ENCODE measurements at regions of chr1 and their contacts with region 1.

Region 1: GRCh38 chr1:32870615-32871363 is at the start of gene FNDC5:
- DNase-seq: peak in 1 of 2 donors; percentile 41
- ATAC-seq: peak; percentile 23 to 68 (median 47)
- H3K4me3 ChIP-seq: peak within 1 kb of the TSS; percentile 42 to 61 (median 52)
- H3K27ac ChIP-seq: peak within 1 kb of the TSS in 8 of 10 donors; percentile 44 to 76 (median 60)
- H3K4me1 ChIP-seq: peaks cover 4 to 44% (median 27%) of the 10 kb centered on the region in 9 donors
- H3K27me3 ChIP-seq: peaks cover 0 to 42% (median 0%) of the 10 kb centered on the region in 7 donors
- CTCF ChIP-seq: no peak
- total RNA-seq, gene FNDC5: 44.7 to 130 (median 73.5) TPM

Region 2: DNA sequence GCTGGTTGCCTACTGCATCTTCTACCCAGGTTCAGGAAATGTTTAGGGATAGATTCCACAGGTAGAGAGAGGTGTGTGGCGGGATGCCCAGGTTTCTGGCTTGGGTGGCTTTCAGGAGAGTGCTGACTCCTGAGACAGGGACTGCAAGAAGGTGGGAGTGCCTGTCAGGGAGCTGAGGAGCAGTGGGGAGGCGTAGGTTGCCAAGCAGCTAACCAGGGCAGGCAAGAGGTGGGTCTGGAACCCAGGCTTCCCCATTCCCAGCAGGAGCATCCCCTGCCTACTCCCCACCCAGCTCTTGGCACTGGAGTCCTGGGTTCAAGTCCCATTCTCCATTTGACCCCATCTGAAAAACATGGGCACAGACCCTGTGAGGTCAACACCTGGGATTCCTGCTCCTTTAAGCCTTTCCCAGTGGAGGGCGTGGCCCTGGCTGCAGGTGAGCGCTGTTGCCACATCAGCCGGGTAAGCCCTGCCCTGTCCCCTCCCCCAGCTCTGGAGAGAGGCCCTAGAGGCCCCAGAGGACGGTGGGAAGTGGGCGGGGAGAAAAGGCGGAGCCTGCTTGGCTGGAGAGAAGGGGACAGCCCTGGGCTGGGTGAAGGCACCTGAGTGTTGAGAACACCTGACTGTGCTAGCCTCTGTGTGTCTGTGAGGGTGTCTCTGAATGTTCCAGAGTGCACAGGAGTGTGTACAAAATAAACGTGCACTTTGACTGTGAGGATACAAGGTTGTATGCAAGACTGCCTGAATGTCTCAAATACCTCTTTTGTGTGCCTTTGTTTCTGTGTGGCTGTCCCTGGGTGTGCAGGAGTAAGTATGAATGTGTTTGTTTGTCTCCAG is 154.3 kb before region 1 on chr1:
- intact Hi-C with region 1: loop called in 7 of 10 experiments (anchors 2 to 10 kb)
- DNase-seq: peak in 1 of 2 donors; percentile 57
- ATAC-seq: peak; percentile 40 to 78 (median 56)
- H3K4me3 ChIP-seq: no peak overlapping the region
- H3K27ac ChIP-seq: no peak overlapping the region
- H3K4me1 ChIP-seq: peaks cover 0 to 9% (median 0%) of the 10 kb centered on the region in 9 donors
- H3K27me3 ChIP-seq: no peaks in the 10 kb centered on the region
- CTCF ChIP-seq: no peak

Region 3: DNA sequence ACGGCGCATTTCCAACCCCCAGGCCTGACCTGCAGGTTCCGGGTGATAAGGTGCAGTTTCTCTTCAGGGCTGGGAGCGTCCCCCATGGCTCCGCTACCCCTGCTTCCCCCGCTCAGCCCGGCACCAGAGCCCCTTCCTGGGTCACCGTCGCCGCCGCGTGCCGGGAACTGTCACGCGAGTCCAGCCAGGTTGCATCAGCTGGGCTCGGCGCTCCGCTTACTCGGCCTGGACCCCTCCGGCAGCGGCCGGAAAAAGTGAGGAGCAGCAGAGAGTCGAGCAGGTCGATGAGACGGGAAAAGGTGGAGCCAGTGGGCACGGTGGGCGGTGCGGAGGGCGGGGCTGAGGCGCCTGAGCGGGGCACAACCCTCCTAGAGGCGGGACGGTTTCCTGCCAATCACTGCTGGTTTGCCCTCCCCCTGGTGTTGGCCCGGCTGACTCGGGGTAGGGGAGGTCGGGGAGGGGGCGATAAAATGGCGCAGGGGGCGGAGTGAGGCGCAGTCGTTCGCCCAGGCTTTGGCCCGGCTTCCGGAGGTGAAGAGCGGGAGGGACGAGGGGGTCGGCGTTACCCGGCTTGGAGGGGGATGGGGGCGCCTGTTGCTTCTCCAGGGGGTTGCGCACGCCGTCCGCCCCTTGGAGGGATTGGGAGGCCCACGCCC is 53.5 kb before region 1 on chr1 and contains the starts of genes S100PBP and YARS1:
- intact Hi-C with region 1: loop called in 4 of 10 experiments (anchors 5 to 10 kb)
- DNase-seq: peak; percentile 100
- ATAC-seq: peak; percentile 96 to 99 (median 98)
- H3K4me3 ChIP-seq: peak within 1 kb of the TSS; percentile 80 to 100 (median 90)
- H3K27ac ChIP-seq: peak within 1 kb of the TSS; percentile 83 to 99 (median 98)
- H3K4me1 ChIP-seq: peaks cover 3 to 57% (median 41%) of the 10 kb centered on the region in 9 donors
- H3K27me3 ChIP-seq: no peaks in the 10 kb centered on the region
- CTCF ChIP-seq: peak in 4 of 9 donors; percentile 6 to 21 (median 9)
- total RNA-seq, gene S100PBP: 9.2 to 18.0 (median 11.5) TPM
- total RNA-seq, gene YARS1: 26.2 to 48.5 (median 31.0) TPM

Region 4: DNA sequence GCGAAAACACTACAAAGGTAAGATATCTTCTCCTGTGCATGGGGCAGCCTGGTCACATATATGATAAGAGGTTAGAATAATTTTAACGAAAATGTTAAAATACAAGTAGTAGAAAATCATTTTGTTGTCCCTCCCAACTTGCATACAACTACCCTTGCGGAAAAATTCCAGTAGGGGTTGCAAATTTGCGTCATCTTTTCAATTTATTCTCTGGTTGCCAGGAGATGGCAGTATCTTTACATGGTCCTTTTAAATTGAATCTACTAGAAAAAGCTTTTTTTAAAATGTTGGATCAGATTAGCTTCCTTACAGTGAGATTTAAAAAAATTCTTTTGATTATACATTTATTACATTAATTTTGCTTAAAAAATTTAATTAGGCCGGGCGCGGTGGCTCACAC is 42.4 kb before region 1 on chr1:
- intact Hi-C with region 1: loop called in 2 of 10 experiments (anchors 5 to 10 kb)
- DNase-seq: no peak
- ATAC-seq: no peak
- H3K4me3 ChIP-seq: no peak overlapping the region
- H3K27ac ChIP-seq: no peak overlapping the region
- H3K4me1 ChIP-seq: peaks cover 0 to 5% (median 0%) of the 10 kb centered on the region in 9 donors
- H3K27me3 ChIP-seq: no peaks in the 10 kb centered on the region
- CTCF ChIP-seq: peak in 7 of 9 donors; percentile 19 to 47 (median 32)

Measured in heart right ventricle (tissue), 16 donors.